Astrocyte of the cerebellum (primary cell): ENCODE measurements at regions of chr13 and their contacts with region 1.

Region 1: DNA sequence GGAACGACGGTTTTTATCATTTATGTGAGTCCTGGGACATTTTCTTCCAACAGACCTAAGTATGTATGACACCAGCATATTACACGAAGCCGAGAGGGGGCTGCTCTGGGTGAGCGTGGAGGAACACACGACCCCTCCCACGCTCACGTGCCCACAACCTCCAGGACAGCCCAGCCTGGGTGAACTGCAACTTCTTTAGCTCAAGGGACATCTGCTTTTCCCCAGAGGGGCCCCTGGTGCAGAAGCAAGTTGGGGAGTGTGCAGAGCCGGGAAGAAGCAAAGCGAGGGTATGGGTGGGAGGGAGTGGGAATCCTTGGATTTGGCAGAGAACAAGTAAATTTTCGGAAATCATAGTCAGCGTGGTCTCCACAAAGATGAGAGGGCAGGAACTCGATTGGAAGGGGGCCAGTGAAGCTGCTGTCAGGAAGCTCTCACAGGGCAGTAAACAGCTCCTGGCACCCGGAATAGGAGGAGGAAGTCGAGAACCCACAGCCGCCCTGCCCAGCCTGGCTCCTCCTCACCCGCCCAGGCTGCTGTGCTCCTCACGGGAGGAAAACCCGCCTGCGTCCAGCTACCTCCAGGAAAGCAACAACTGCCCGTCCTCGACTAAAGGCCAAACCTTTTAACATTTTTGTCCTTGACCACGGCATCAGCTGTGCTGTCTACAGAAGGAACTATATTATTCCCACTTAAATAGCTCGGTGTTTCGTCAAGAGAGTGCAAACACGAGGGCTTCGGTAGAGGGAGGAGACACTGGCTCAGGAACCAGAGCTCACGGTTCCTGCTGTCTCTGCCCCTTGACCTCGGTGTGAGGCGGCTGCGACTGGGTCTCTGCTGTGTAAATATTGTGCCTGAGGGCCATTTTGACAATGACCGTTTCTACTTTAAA is 17.2 kb upstream of the CFAP97D2 start:
- DNase-seq: no peak
- H3K4me3 ChIP-seq: no peak overlapping the region
- CTCF ChIP-seq: no peak

Region 2: DNA sequence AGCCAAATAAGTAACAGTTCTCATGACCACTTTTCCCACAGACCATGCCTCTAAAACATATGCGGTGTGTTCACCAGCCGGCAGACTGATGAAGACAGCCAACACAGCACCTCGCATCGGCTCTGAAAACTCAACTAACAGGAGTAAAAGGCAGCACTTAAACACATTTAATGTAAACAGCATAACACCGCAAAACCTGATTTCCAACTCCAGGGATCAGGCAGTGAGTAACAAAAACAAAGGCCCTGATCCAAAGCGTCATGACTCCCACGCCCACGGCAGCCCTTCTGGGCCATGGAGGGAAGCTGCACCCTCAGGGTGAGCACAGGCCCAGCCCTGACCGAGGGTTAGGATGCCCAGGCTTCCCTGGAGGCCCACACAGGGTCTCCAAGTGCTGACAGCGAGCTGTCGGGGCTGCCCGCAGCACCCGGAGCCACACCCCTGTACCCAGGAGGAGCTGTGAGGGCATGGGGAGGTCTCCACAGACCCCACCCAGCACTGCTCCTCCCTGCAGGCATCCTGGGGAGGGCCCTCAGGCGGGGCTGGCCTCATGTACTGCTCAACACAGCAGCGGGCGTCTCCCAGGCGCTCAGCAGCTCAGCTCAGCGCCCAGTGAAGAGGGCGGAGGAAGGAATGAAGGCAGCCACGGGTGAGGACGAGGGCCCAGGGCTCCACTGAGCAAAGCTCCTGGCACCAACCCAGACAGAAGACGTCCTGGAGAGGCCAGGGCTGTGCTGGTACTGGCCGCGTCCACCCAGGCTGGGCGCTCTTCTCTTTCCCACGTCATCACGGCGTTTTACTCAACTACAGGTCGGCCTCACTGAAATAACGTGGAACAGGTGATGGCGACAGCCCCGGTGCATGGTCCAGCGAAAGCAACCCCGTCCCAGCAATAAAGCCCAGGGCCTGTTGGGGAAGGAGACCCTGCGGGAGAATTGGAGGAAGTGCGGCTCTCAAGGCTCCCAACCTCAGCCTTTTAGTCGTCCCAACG is 83.1 kb before region 1 on chr13:
- in situ Hi-C with region 1: loop called (anchors 10 kb)
- DNase-seq: peak; percentile 43
- H3K4me3 ChIP-seq: no peak overlapping the region
- CTCF ChIP-seq: no peak

Region 3: DNA sequence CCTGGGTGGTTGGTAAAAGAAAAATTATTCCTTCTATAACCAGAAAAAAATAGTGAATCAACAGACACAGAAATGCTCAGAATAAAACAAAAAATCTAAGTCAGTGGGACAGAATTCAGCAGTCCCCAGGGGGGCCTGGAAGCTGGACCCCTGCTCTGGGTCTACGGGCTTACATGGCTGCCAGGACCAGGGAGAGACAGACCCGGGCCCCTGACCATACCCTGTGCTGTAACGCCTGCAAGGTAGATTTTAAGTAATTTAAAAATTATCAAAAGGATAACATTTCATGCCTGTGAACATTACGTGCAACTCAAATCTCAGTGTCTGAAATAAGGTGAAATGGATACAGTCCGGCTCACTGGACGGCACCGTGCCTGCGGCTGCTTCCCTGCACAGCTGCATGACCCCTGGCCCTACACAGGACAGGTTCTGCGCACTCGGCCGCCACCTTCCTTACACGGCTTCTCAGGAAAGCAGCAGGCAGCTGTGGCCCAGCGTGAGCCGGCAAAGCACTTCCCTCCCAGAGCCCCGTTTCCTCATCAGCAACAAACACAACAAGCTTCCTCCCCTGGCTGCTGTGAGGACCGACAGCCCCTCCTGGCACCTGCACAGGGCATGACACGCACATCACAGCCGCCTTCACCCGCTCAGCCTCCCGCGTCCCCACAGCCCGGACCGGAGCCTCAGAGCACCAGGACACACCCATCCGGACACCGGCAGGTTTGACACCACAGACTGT is 51.6 kb before region 1 on chr13:
- in situ Hi-C with region 1: loop called (anchors 5 kb)
- DNase-seq: no peak
- H3K4me3 ChIP-seq: no peak overlapping the region
- CTCF ChIP-seq: no peak

Region 4: DNA sequence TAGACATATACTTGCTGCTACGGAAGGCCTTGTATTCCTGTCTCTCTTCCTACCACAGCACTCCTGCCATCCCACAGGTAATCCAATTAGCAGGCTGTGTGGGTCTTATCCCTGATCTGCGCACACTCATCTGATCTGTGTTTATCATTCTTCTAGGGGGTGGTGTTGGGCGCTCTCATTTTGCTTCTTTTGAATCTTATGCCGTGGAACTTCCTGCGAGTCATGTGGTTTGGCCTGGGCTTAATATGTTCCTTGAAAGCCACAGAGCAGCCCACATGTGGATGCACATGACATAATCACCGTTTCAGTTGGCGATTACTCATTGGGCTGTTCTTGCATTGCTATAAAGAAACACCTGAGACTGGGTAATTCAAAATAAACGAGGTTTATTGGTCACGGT is 37.0 kb before region 1 on chr13:
- in situ Hi-C with region 1: no loop called
- DNase-seq: peak; percentile 85
- H3K4me3 ChIP-seq: no peak overlapping the region
- CTCF ChIP-seq: no peak